IMR-90 (cell line): ENCODE measurements at regions of chr6 and their contacts with region 1.

Region 1: GRCh38 chr6:136723780-136724179 is 68.5 kb downstream of the MAP3K5 start:
- DNase-seq: no peak
- ATAC-seq: no peak
- H3K4me3 ChIP-seq: no peak overlapping the region
- H3K27ac ChIP-seq: no peak overlapping the region
- H3K4me1 ChIP-seq: peaks cover 2% of the 10 kb centered on the region; the same call in 1 of the 2 replicates
- H3K27me3 ChIP-seq: no peaks in the 10 kb centered on the region
- CTCF ChIP-seq: no peak
- POLR2A ChIP-seq: no peak
- RAD21 ChIP-seq: no peak

Region 2: GRCh38 chr6:136317021-136317694 is 406.6 kb before region 1 on chr6:
- CTCF ChIA-PET with region 1: no interaction called
- POLR2A ChIA-PET with region 1: no interaction called
- dilution Hi-C with region 1: no loop called
- in situ Hi-C with region 1: no loop called
- intact Hi-C with region 1: no loop called
- DNase-seq: peak; percentile 69
- ATAC-seq: peak; percentile 96
- H3K4me3 ChIP-seq: no peak overlapping the region
- H3K27ac ChIP-seq: no peak overlapping the region
- H3K4me1 ChIP-seq: no peaks in the 10 kb centered on the region
- H3K27me3 ChIP-seq: peaks cover 7% of the 10 kb centered on the region
- CTCF ChIP-seq: peak; percentile 81
- POLR2A ChIP-seq: no peak
- RAD21 ChIP-seq: peak; percentile 82

Region 3: DNA sequence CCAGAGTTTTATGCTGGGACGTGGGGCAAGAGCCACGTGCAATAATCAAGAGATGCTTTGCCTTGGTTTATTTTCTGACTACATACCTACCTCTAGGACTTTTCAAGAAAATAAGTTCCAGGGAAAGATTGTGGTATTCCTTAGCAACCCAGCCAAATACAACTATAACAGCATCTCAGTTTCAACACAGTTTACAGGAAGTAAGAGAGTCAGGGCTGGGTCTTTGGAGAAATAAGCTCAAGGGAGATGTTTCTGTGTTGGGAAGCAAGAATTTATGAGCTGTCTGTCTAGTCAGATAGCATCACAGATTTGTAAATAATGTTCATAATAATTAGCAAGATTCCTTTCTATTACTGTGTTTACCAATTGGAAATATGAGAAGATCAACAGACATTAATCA is 33.4 kb after region 1 on chr6:
- CTCF ChIA-PET with region 1: no interaction called
- POLR2A ChIA-PET with region 1: no interaction called
- dilution Hi-C with region 1: no loop called
- in situ Hi-C with region 1: no loop called
- intact Hi-C with region 1: no loop called
- DNase-seq: peak; percentile 36
- ATAC-seq: no peak
- H3K4me3 ChIP-seq: no peak overlapping the region
- H3K27ac ChIP-seq: no peak overlapping the region
- H3K4me1 ChIP-seq: peaks cover 12% of the 10 kb centered on the region
- H3K27me3 ChIP-seq: no peaks in the 10 kb centered on the region
- CTCF ChIP-seq: 0 out of 2 replicates have a peak, but pooled peaks have one; percentile 6
- POLR2A ChIP-seq: no peak
- RAD21 ChIP-seq: no peak

Region 4: GRCh38 chr6:136771306-136771705 is 47.5 kb after region 1 on chr6:
- CTCF ChIA-PET with region 1: no interaction called
- POLR2A ChIA-PET with region 1: no interaction called
- dilution Hi-C with region 1: no loop called
- in situ Hi-C with region 1: no loop called
- intact Hi-C with region 1: loop called (anchors 2 kb)
- DNase-seq: no peak
- ATAC-seq: no peak
- H3K4me3 ChIP-seq: no peak overlapping the region
- H3K27ac ChIP-seq: no peak overlapping the region
- H3K4me1 ChIP-seq: peaks cover 9% of the 10 kb centered on the region
- H3K27me3 ChIP-seq: no peaks in the 10 kb centered on the region
- CTCF ChIP-seq: no peak
- POLR2A ChIP-seq: no peak
- RAD21 ChIP-seq: no peak